Colonic mucosa (tissue), 4 donors: ENCODE measurements at regions of chr4 and their contacts with region 1.

Region 1: GRCh38 chr4:68271851-68272756 is 26.6 kb upstream of the TMPRSS11B start:
- DNase-seq: no peak
- H3K4me3 ChIP-seq: no peak overlapping the region
- H3K27ac ChIP-seq: no peak overlapping the region
- H3K4me1 ChIP-seq: no peaks in the 10 kb centered on the region
- H3K27me3 ChIP-seq: no peaks in the 10 kb centered on the region
- CTCF ChIP-seq: peak; percentile 64

Region 2: GRCh38 chr4:68375667-68376559 is 103.8 kb after region 1 on chr4:
- intact Hi-C with region 1: loop called (anchors 2 kb)
- DNase-seq: peak; percentile 55
- H3K4me3 ChIP-seq: no peak overlapping the region
- H3K27ac ChIP-seq: no peak overlapping the region
- H3K4me1 ChIP-seq: no peaks in the 10 kb centered on the region
- H3K27me3 ChIP-seq: no peaks in the 10 kb centered on the region
- CTCF ChIP-seq: peak; percentile 81

Region 3: GRCh38 chr4:69167300-69167699 is 895.2 kb after region 1 on chr4:
- intact Hi-C with region 1: loop called (anchors 10 kb)
- DNase-seq: no peak
- H3K4me3 ChIP-seq: no peak overlapping the region
- H3K27ac ChIP-seq: no peak overlapping the region
- H3K4me1 ChIP-seq: no peaks in the 10 kb centered on the region
- H3K27me3 ChIP-seq: no peaks in the 10 kb centered on the region
- CTCF ChIP-seq: no peak